ENCODE measurements at regions of chr7 and their contacts with region 1.

Region 1: DNA sequence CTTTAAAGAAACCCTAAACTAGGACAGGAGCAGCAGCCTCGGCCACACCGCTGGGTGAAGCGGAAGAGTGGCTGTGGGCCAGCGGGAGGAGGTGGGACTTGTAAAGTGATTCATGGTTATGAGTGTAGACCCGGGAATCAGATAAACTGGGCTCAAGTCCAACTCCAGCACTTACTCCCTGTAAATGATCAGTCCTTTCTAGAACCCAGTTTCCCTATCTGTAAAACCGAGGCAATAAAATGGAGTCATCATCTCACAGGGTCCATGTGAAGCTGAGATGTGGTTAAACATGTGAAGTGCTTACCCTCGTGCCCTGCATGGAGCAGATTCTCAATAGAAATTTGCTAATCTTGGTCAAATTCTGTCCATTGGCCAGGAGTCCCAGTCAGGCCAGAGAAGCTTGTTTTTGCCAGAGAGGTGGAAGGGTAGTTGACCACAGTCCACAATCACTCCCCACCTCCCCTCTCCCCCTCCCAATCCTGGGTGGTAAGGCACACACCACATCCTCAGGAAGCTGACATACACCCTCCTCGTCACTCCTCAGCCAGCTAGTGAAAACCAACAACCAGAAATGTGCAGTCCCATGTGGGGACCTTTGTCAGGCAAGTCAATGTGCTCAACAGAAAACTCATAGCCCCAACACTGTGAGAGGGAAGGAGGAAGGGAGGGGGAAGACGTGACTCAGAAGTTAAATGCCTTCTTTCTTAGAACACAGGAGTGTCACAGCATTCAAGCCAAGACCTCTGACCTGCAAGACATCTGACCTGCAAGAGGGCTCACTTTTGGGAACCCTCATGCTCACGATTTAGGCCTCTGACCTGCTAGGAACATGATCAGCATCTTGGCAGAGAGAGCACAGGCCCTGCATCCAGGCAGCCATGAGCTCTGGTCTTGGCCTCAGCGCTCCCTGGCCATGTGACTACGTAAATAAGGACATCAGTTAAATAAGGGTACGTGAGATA is 145.1 kb downstream of the PLXNA4 start:
- DNase-seq: peak; percentile 78
- ATAC-seq: peak; percentile 92
- H3K4me3 Mint-ChIP-seq: no peak overlapping the region
- H3K27ac Mint-ChIP-seq: peak overlapping the region; percentile 77
- H3K4me1 Mint-ChIP-seq: peaks cover 72% of the 10 kb centered on the region
- H3K27me3 Mint-ChIP-seq: no peaks in the 10 kb centered on the region
- CTCF ChIP-seq: no peak

Region 2: GRCh38 chr7:132441935-132442334 is 10.8 kb after region 1 on chr7:
- CTCF ChIA-PET with region 1: interaction called, 6 read pairs
- POLR2A ChIA-PET with region 1: interaction called, 12 read pairs
- intact Hi-C with region 1: no loop called
- DNase-seq: no peak
- ATAC-seq: no peak
- H3K4me3 Mint-ChIP-seq: no peak overlapping the region
- H3K27ac Mint-ChIP-seq: no peak overlapping the region
- H3K4me1 Mint-ChIP-seq: peaks cover 39% of the 10 kb centered on the region
- H3K27me3 Mint-ChIP-seq: no peaks in the 10 kb centered on the region
- CTCF ChIP-seq: no peak